ENCODE measurements at regions of chr4 and their contacts with region 1.

Region 1: GRCh38 chr4:70993181-70994068 is at the start of gene DCK:
- DNase-seq: peak; percentile 79 to 87 (median 84)
- H3K4me3 ChIP-seq: peak within 1 kb of the TSS; percentile 76
- H3K4me3 Mint-ChIP-seq: peak within 1 kb of the TSS; percentile 92 to 98 (median 95)
- H3K27ac ChIP-seq: peak within 1 kb of the TSS; percentile 73
- H3K27ac Mint-ChIP-seq: peak within 1 kb of the TSS; percentile 77 to 98 (median 95)
- H3K4me1 ChIP-seq: peaks cover 40% of the 10 kb centered on the region
- H3K4me1 Mint-ChIP-seq: peaks cover 42 to 54% (median 51%) of the 10 kb centered on the region in 3 donors
- H3K27me3 ChIP-seq: no peaks in the 10 kb centered on the region
- H3K27me3 Mint-ChIP-seq: no peaks in the 10 kb centered on the region
- total RNA-seq, gene DCK: 33.8 to 34.8 TPM

Region 2: GRCh38 chr4:71004281-71004851 is 10.9 kb after region 1 on chr4:
- CTCF ChIA-PET with region 1: interaction called, 94 read pairs
- POLR2A ChIA-PET with region 1: interaction called, 13 read pairs
- DNase-seq: peak; percentile 37 to 80 (median 62)
- H3K4me3 ChIP-seq: peak overlapping the region; percentile 44
- H3K4me3 Mint-ChIP-seq: peak overlapping the region; percentile 66 to 83 (median 75)
- H3K27ac ChIP-seq: no peak overlapping the region
- H3K27ac Mint-ChIP-seq: peak overlapping the region; percentile 80 to 98 (median 94)
- H3K4me1 ChIP-seq: peaks cover 37% of the 10 kb centered on the region
- H3K4me1 Mint-ChIP-seq: peaks cover 87 to 92% (median 92%) of the 10 kb centered on the region in 3 donors
- H3K27me3 ChIP-seq: no peaks in the 10 kb centered on the region
- H3K27me3 Mint-ChIP-seq: no peaks in the 10 kb centered on the region

Region 3: GRCh38 chr4:71009890-71010588 is 16.6 kb after region 1 on chr4:
- CTCF ChIA-PET with region 1: interaction called, 94 read pairs
- POLR2A ChIA-PET with region 1: interaction called, 13 read pairs
- DNase-seq: peak in 2 of 5 donors; percentile 29 to 48
- H3K4me3 ChIP-seq: no peak overlapping the region
- H3K4me3 Mint-ChIP-seq: peak overlapping the region in 1 of 7 donors; percentile 4
- H3K27ac ChIP-seq: no peak overlapping the region
- H3K27ac Mint-ChIP-seq: peak overlapping the region; percentile 30 to 85 (median 72)
- H3K4me1 ChIP-seq: peaks cover 26% of the 10 kb centered on the region
- H3K4me1 Mint-ChIP-seq: peaks cover 50 to 60% (median 57%) of the 10 kb centered on the region in 3 donors
- H3K27me3 ChIP-seq: no peaks in the 10 kb centered on the region
- H3K27me3 Mint-ChIP-seq: no peaks in the 10 kb centered on the region

Region 4: DNA sequence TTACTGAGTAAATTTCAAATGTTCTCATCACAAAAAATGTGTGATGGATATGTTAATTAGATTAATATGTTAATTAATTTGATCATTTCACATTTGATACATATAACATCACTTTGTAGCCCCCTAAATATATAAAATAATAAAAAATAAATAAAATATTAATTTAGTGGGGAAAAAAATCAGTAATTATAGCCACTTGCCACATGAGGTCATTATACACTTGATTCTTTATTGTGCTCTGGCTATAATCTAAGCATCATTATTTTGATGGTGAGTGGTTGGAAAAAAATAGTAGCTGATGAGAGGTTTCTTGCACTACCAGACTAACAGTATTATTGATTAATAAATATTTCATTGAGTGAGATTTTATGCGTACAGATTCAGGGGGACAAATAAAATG is 57.4 kb after region 1 on chr4:
- CTCF ChIA-PET with region 1: no interaction called
- POLR2A ChIA-PET with region 1: no interaction called
- DNase-seq: peak in 1 of 5 donors; percentile 4
- H3K4me3 ChIP-seq: no peak overlapping the region
- H3K4me3 Mint-ChIP-seq: no peak overlapping the region
- H3K27ac ChIP-seq: no peak overlapping the region
- H3K27ac Mint-ChIP-seq: no peak overlapping the region
- H3K4me1 ChIP-seq: no peaks in the 10 kb centered on the region
- H3K4me1 Mint-ChIP-seq: peaks cover 0 to 5% (median 2%) of the 10 kb centered on the region in 3 donors
- H3K27me3 ChIP-seq: no peaks in the 10 kb centered on the region
- H3K27me3 Mint-ChIP-seq: no peaks in the 10 kb centered on the region

Measured in CD8-positive, alpha-beta memory T cell (primary cell).